ENCODE measurements at regions of chr5 and their contacts with region 1.

Region 1: GRCh38 chr5:132495667-132496190 is 5.2 kb upstream of the IRF1 start:
- DNase-seq: peak; percentile 79 to 90
- H3K4me3 ChIP-seq: peak overlapping the region; percentile 65
- H3K27ac ChIP-seq: peak overlapping the region; percentile 96
- H3K4me1 ChIP-seq: peaks cover 62% of the 10 kb centered on the region
- H3K27me3 ChIP-seq: no peaks in the 10 kb centered on the region
- CTCF ChIP-seq: no peak; the same call in 1 of the 2 replicates

Region 2: DNA sequence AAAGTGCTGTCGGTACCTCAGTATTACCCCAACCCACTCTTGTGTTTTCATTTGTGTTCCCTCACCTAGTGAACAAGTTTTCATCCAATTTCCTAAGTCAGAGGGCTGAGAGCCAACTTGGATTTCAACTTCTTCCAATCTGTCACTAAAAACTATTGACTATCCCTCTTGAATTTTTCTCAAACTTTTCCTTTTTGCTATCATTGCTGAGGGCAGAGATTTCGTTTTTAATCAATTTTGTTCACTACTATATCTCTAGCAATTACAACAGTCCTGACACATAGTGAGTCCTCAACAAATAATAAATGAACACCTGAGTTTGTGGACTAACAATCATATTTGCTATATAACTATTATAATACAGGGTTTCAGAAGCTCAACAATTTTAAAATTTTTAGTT is 579.2 kb before region 1 on chr5:
- CTCF ChIA-PET with region 1: no interaction called
- POLR2A ChIA-PET with region 1: no interaction called
- intact Hi-C with region 1: no loop called
- DNase-seq: no peak
- H3K4me3 ChIP-seq: no peak overlapping the region
- H3K27ac ChIP-seq: no peak overlapping the region
- H3K4me1 ChIP-seq: no peaks in the 10 kb centered on the region
- H3K27me3 ChIP-seq: peaks cover 11% of the 10 kb centered on the region; the same call in 1 of the 2 replicates
- CTCF ChIP-seq: no peak

Region 3: DNA sequence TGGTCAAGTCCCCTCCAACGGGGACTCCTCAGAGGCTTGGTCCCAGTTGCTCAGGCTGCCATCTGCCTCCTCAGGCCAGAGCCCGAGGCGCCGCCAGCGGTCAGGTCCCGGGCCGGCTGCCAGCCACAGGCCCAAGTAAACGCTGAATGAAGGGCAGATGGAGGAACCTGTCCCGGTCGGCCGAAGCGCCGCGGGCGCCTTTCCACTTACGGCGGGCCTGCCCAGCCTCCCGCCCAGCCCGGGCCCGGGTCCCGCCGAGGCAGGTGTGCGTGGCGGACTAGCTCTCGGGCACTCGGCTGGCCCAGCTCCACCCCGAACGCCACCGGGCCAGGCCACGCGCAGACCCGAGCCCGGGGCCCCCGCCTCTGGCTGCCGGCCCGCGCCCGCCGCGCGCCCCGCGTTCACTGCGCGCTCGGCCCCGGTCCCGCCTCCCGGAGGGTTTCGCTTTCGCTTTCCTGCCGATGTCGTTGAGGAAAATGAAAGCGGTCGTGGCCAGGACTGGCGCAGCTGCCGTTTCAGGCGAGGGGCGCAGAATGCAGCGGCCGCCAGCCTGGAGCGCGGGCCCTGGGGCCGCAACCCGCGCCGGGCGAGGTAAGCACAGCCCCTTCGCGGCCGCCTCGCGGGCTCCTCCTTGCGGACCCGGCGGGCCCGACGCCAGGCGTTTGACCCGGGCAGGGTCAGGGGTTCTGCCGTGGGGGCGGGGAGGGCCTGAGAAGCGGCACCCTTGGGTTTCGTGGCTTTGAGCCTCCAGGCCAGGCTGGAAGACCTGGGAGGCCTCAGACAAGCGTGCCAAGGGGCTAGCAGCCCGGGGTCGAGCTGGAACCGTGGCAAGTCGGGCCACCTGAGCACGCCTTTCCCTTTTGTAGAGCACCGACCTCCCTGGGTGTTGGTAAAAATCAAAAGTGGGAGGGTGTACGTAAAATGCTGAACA is 85.0 kb before region 1 on chr5:
- CTCF ChIA-PET with region 1: interaction called, 6 read pairs
- POLR2A ChIA-PET with region 1: interaction called, 15 read pairs
- intact Hi-C with region 1: loop called (anchors 1 kb)
- DNase-seq: peak; percentile 64 to 80
- H3K4me3 ChIP-seq: peak overlapping the region; percentile 79
- H3K27ac ChIP-seq: peak overlapping the region; percentile 92
- H3K4me1 ChIP-seq: peaks cover 59% of the 10 kb centered on the region
- H3K27me3 ChIP-seq: no peaks in the 10 kb centered on the region
- CTCF ChIP-seq: peak; percentile 73

Region 4: GRCh38 chr5:132426525-132427138 is 69.1 kb before region 1 on chr5:
- CTCF ChIA-PET with region 1: interaction called, 5 read pairs
- POLR2A ChIA-PET with region 1: interaction called, 8 read pairs
- intact Hi-C with region 1: loop called (anchors 2 kb)
- DNase-seq: peak; percentile 78 to 93
- H3K4me3 ChIP-seq: peak overlapping the region; percentile 11; the same call in 1 of the 2 replicates
- H3K27ac ChIP-seq: peak overlapping the region; percentile 87
- H3K4me1 ChIP-seq: peaks cover 79% of the 10 kb centered on the region
- H3K27me3 ChIP-seq: no peaks in the 10 kb centered on the region
- CTCF ChIP-seq: peak; percentile 44; the same call in 1 of the 2 replicates

Region 5: GRCh38 chr5:132446669-132447068 is 49.1 kb before region 1 on chr5:
- CTCF ChIA-PET with region 1: no interaction called
- POLR2A ChIA-PET with region 1: no interaction called
- intact Hi-C with region 1: loop called (anchors 2 kb)
- DNase-seq: peak; percentile 62 to 73
- H3K4me3 ChIP-seq: no peak overlapping the region
- H3K27ac ChIP-seq: peak overlapping the region; percentile 88
- H3K4me1 ChIP-seq: peaks cover 55% of the 10 kb centered on the region
- H3K27me3 ChIP-seq: no peaks in the 10 kb centered on the region
- CTCF ChIP-seq: no peak

Region 6: DNA sequence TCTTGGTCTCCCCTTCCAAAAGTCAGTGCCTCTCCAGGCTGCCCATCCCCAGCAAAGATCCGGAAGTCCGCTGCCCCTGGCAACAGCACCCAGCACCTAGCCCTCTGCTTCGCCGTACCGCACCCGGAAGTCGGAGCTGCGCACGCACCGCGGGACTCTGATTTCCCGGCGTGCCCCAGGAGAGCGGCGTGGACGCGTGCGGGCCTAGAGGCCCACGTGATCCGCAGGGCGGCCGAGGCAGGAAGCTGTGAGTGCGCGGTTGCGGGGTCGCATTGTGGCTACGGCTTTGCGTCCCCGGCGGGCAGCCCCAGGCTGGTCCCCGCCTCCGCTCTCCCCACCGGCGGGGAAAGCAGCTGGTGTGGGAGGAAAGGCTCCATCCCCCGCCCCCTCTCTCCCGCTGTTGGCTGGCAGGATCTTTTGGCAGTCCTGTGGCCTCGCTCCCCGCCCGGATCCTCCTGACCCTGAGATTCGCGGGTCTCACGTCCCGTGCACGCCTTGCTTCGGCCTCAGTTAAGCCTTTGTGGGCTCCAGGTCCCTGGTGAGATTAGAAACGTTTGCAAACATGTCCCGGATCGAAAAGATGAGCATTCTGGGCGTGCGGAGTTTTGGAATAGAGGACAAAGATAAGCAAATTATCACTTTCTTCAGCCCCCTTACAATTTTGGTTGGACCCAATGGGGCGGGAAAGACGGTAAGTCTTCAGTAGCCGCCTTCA is 61.2 kb after region 1 on chr5 and contains the start of gene RAD50:
- CTCF ChIA-PET with region 1: no interaction called
- POLR2A ChIA-PET with region 1: no interaction called
- intact Hi-C with region 1: loop called (anchors 5 kb)
- DNase-seq: peak; percentile 73 to 88
- H3K4me3 ChIP-seq: peak within 1 kb of the TSS; percentile 97
- H3K27ac ChIP-seq: peak within 1 kb of the TSS; percentile 74
- H3K4me1 ChIP-seq: peaks cover 18% of the 10 kb centered on the region
- H3K27me3 ChIP-seq: no peaks in the 10 kb centered on the region
- CTCF ChIP-seq: no peak
- total RNA-seq, gene RAD50: 33.9 and 42.2 TPM in 2 replicates